Mammary epithelial cell (primary cell): ENCODE measurements at regions of chr2 and their contacts with region 1.

Region 1: DNA sequence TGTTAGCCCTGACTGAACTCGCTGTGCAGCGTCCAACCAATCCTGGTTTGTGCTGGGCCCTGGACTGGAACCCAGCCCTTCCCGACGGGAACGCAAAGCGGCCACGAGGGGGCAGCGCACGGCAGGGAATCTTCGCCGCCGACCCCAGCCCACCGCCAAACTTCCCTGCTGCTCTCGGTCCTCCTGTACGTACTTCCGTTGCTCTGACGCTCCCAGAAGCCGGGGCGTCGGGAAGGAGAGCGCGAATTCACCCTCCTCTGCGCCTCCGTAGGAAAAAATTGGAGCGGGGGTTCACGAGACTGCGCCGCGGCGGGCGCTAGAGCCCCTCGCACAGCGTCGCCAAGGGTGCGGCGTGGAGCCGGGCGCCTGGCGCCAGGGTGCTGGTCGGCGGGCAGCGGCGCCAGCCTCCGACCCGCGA is 948 bp upstream of the SH3RF3 start:
- DNase-seq: peak; percentile 50
- H3K4me3 ChIP-seq: peak overlapping the region; percentile 42 to 59 (median 56)
- H3K27ac ChIP-seq: no peak overlapping the region
- H3K4me1 ChIP-seq: peaks cover 42% of the 10 kb centered on the region
- H3K27me3 ChIP-seq: peaks cover 11% of the 10 kb centered on the region
- CTCF ChIP-seq: peak; percentile 72 to 80

Region 2: GRCh38 chr2:108351889-108352288 is 776.2 kb before region 1 on chr2:
- CTCF ChIA-PET with region 1: no interaction called
- dilution Hi-C with region 1: no loop called
- in situ Hi-C with region 1: no loop called
- intact Hi-C with region 1: loop called (anchors 5 kb)
- DNase-seq: no peak
- H3K4me3 ChIP-seq: no peak overlapping the region
- H3K27ac ChIP-seq: no peak overlapping the region
- H3K4me1 ChIP-seq: no peaks in the 10 kb centered on the region
- H3K27me3 ChIP-seq: no peaks in the 10 kb centered on the region
- CTCF ChIP-seq: no peak

Region 3: DNA sequence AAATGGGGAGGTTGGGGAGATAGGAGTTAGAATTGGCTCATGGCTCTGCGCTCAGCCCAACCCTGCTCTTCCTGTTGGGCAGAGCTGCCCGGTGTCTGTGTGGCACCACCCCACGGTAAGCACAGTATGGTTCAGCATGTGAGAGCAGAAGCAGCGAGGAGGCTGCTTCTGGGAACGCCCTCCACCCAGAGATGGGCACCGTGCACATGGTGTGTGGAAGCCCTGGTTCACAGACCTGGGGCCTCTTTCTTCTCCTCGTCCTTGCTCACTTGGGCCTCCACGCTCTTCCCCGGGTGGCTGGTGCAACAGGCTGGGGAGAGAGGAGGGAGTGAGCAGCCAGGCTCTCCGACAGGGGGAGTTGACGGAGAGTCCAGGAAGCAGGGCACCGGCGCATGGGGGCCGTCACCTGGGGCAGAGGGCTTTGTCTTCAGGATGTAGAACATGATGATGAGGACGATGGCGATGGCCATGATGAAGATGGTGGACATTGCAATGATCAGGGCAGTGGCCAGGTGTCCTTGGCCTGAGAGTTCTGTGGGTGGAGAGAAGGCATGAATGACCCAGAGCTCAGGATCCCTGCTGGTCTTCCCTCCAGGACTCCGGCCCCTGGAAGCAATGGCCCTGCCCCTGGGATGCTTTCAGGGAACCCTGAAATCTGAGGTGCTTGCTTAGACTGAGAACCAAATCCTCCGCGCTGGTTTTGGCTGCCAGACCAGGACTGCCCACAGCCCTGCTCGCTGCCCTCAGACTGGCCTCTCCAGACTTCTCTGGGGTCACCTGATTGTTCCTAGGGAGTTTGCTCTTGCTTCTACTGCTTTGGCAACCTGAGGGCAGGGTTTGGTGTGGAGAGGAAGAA is 217.3 kb before region 1 on chr2:
- CTCF ChIA-PET with region 1: no interaction called
- dilution Hi-C with region 1: no loop called
- in situ Hi-C with region 1: no loop called
- intact Hi-C with region 1: no loop called
- DNase-seq: no peak
- H3K4me3 ChIP-seq: no peak overlapping the region
- H3K27ac ChIP-seq: no peak overlapping the region
- H3K4me1 ChIP-seq: peaks cover 4% of the 10 kb centered on the region
- H3K27me3 ChIP-seq: peaks cover 27% of the 10 kb centered on the region
- CTCF ChIP-seq: no peak

Region 4: DNA sequence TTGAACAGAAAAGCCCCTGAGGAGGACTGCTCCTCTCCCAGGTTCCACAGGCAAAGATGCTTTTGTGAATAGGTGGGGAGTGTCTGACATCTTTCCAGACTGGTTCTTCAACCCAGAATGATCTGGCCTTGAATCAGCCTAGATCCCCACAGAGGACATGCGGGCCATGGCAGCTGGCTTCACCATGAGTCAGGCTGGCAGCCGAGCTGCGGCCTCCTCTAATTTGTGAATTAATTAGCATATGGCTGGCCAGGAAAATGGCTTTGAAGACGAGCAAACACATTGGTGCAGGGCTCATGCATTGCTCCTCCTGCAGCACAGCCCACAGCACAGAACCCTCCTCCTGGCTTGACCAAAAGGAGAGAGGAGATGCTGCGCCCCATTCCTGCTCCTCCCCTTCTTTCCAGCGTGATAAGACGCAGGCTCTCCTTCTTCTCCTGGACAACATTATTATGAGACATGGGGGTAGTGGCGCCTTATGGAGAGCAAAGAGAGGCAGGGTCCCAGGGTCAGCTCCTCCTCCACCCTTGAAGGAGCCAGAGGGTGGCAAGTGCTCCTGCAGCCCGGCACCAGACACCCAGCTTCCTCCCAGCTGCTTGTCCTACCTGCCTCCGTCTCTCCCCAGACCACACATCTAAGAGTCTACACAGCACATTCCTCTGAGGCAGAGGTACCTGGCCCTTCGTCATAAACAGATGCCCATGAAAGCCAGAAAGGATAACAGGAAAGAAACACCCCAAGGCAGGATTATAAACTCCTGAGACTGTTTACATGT is 205.7 kb before region 1 on chr2:
- CTCF ChIA-PET with region 1: no interaction called
- dilution Hi-C with region 1: no loop called
- in situ Hi-C with region 1: no loop called
- intact Hi-C with region 1: loop called (anchors 5 kb)
- DNase-seq: peak; percentile 91
- H3K4me3 ChIP-seq: no peak overlapping the region
- H3K27ac ChIP-seq: no peak overlapping the region
- H3K4me1 ChIP-seq: peaks cover 39% of the 10 kb centered on the region
- H3K27me3 ChIP-seq: peaks cover 14% of the 10 kb centered on the region
- CTCF ChIP-seq: no peak

Region 5: GRCh38 chr2:109209412-109209811 is 81.4 kb after region 1 on chr2:
- CTCF ChIA-PET with region 1: interaction called, 3 read pairs
- dilution Hi-C with region 1: no loop called
- in situ Hi-C with region 1: no loop called
- intact Hi-C with region 1: loop called (anchors 1 kb)
- DNase-seq: peak; percentile 66
- H3K4me3 ChIP-seq: no peak overlapping the region
- H3K27ac ChIP-seq: no peak overlapping the region
- H3K4me1 ChIP-seq: peaks cover 36% of the 10 kb centered on the region
- H3K27me3 ChIP-seq: peaks cover 8% of the 10 kb centered on the region
- CTCF ChIP-seq: no peak

Region 6: DNA sequence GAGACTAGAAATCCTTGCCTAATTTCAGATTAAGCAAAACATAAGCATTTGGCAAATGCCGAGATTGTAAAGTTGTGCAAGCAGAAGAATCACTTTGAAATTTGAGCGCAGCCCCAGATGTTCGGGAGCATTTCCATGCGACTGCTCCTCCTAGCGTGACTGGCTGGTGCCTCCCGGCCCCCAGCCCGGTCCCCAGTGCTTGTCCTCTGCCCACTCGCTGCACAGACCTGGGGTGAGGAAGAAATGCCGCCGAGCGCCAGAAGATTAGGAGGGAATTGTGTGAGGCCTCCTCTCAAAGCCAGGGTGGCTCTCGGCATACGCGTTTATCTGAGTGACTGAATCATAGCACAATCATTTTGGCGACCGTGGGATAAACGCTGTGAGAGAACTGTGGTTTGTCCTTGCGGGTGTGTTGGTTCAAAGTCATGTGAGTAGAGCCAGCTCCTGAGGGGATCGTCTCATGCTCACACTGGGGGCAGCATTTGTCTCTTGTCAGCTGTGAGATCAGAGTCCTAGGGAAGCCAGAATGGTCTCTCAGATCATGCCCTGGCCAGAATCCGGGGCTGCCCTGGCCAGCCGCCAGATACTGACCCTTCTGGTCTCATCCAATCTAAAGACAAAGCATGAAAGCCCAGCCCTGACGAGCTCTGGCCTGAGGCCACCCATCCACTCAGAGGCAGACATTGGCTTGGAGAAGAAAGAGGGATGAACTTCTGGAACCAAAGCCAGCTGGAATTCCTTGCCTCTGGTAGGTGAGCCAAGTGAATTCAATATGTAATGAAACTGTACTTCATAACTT is 190.3 kb after region 1 on chr2:
- CTCF ChIA-PET with region 1: no interaction called
- dilution Hi-C with region 1: no loop called
- in situ Hi-C with region 1: no loop called
- intact Hi-C with region 1: loop called (anchors 10 kb)
- DNase-seq: no peak
- H3K4me3 ChIP-seq: no peak overlapping the region
- H3K27ac ChIP-seq: no peak overlapping the region
- H3K4me1 ChIP-seq: peaks cover 20% of the 10 kb centered on the region
- H3K27me3 ChIP-seq: peaks cover 3% of the 10 kb centered on the region
- CTCF ChIP-seq: no peak

Region 7: DNA sequence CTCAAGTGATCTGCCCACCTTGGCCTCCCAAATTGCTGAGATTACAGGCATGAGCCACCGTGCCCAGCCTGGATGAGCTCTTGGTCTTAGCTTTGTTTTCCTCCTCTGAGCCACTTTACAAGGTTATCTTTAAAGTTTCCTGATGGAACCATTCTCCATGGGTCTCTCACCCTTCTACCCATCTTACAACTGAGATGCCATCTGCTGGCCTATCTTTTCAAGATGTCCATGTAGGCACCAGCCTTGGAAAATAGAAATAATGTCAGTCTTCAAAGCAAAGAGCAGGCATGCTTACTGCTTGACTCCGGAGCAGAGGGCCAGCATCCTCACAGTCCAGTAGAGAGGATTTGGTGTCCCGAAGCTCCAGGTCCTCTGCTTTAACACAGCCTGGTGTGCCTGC is 361.9 kb after region 1 on chr2:
- CTCF ChIA-PET with region 1: interaction called, 5 read pairs
- dilution Hi-C with region 1: no loop called
- in situ Hi-C with region 1: no loop called
- intact Hi-C with region 1: loop called (anchors 5 kb)
- DNase-seq: no peak
- H3K4me3 ChIP-seq: no peak overlapping the region
- H3K27ac ChIP-seq: no peak overlapping the region
- H3K4me1 ChIP-seq: no peaks in the 10 kb centered on the region
- H3K27me3 ChIP-seq: no peaks in the 10 kb centered on the region
- CTCF ChIP-seq: peak in 1 of 2 donors; percentile 34

Region 8: GRCh38 chr2:109715313-109715805 is 587.3 kb after region 1 on chr2:
- CTCF ChIA-PET with region 1: no interaction called
- dilution Hi-C with region 1: no loop called
- in situ Hi-C with region 1: no loop called
- intact Hi-C with region 1: loop called (anchors 1 kb)
- DNase-seq: peak; percentile 51
- H3K4me3 ChIP-seq: no peak overlapping the region
- H3K27ac ChIP-seq: no peak overlapping the region
- H3K4me1 ChIP-seq: no peaks in the 10 kb centered on the region
- H3K27me3 ChIP-seq: no peaks in the 10 kb centered on the region
- CTCF ChIP-seq: peak; percentile 67 to 94